Activated CD4-positive, alpha-beta memory T cell treated with anti-CD3 and anti-CD28 coated beads for 36 hours (primary cell): ENCODE measurements at regions of chr2 and their contacts with region 1.

Region 1: DNA sequence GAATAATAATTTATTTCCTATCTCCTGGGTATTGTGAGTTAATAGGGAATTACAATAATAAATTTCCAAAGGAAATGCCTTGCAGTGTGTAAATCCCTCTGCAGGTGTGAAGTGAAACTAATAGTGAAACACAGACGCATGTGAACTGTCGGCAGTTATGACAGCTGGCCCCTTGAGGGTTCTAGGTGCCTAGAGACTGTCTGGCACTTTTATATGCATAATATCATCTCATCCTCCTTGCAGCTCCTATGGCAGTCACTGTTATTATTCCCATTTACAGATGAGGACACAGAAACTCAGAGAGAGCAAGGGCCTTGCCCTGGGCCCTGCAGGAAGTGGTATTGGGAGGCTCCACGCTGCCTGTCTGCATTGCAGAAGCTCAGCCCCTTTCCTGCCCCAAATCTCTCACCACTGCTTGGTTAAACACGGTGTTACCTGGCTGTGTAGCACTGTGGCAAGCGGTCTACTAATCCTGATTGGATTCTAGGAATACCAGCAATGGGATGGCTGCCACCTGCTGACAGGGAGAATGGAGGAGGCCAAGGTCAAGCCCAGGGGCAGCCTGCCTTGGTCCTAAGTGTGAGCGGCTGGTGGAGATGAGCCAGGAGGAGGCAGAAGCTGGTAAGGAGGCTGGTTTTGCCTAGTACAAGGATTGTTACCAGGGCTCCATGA is 32.8 kb upstream of the ACKR3 start:
- DNase-seq: peak; percentile 60
- H3K4me3 Mint-ChIP-seq: peak overlapping the region; percentile 74
- H3K27ac Mint-ChIP-seq: peak overlapping the region; percentile 73
- H3K4me1 Mint-ChIP-seq: peaks cover 50% of the 10 kb centered on the region
- H3K27me3 Mint-ChIP-seq: no peaks in the 10 kb centered on the region

Region 2: DNA sequence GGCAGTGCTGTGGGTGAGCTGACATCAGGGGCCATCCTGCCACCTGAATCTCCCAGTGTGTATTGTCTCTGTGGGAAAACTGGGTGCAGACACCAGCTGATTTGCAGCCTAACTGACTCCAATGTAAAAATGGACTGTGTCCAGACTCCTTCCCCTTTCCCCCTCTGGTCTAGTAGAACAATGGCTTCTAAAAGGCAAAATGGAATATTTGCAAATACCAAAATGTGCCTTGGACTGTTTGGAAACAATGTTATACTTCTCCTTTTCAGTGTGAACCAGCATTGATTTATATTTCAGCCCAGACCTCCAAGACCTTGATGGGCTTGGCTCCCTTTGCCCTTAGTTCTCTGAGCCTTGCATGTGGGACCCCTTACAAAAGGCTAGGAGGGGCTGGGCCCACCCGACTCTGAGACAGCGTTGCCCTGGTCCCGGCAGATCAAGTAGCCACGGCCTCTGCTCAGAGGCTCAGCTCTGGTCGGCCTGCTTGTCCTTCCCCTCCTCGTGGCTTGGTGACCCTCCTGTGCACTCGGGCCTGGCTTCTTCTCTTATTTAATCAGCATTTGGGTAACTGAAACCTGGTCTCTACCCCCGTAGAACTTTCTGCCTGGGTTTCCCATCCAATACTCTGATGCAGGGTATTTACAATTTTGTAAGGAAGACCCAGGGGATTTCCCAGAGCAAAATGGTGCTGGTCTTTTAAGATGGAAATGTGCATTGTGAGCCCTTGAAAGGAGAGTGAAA is 14.8 kb after region 1 on chr2:
- CTCF ChIA-PET with region 1: interaction called, 5 read pairs
- POLR2A ChIA-PET with region 1: interaction called, 3 read pairs
- intact Hi-C with region 1: loop called (anchors 1 kb)
- DNase-seq: no peak
- H3K4me3 Mint-ChIP-seq: peak overlapping the region; percentile 13
- H3K27ac Mint-ChIP-seq: peak overlapping the region; percentile 68
- H3K4me1 Mint-ChIP-seq: peaks cover 93% of the 10 kb centered on the region
- H3K27me3 Mint-ChIP-seq: no peaks in the 10 kb centered on the region

Region 3: GRCh38 chr2:236562434-236562833 is 25.6 kb after region 1 on chr2:
- CTCF ChIA-PET with region 1: no interaction called
- POLR2A ChIA-PET with region 1: no interaction called
- intact Hi-C with region 1: no loop called
- DNase-seq: no peak
- H3K4me3 Mint-ChIP-seq: no peak overlapping the region
- H3K27ac Mint-ChIP-seq: no peak overlapping the region
- H3K4me1 Mint-ChIP-seq: peaks cover 23% of the 10 kb centered on the region
- H3K27me3 Mint-ChIP-seq: no peaks in the 10 kb centered on the region

Region 4: DNA sequence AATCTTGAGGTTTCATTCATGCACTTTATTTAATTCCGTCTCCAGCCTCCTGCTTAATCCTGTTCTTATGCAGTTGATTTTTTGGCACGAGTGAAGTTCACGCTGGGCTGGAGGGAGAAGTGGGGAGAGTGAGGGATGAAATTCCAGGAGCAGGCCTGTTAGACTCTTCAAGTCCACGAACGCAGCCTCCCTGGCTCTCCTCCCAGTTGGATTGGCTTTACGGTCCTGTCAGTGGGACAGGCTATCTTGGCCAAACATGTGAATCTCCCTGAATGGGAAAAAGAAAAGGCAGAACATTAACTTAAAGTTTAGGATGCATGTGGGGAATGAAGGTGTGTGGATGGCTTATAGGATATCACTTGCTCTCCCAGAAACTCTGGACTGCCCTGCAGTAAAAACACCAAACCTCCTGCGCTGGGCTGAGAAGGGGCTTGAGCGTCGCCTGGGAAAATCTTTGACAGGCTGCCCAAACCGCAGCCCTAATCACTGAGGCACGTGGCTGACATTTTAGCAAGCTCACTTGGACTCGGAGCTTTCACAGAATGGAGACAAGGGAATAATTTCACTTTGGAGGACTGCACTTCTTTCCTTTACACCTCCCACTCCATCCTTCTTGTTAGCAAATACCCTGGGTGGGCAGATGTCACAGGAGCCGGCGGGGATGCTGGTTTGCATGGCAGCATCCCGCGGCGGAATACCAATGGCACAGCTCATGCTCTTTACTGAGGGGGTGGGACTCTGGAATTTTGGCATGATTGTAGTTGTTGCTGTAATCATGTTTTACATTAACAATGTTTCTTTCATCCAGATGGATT is 126.6 kb after region 1 on chr2:
- CTCF ChIA-PET with region 1: no interaction called
- POLR2A ChIA-PET with region 1: no interaction called
- intact Hi-C with region 1: no loop called
- DNase-seq: no peak
- H3K4me3 Mint-ChIP-seq: no peak overlapping the region
- H3K27ac Mint-ChIP-seq: no peak overlapping the region
- H3K4me1 Mint-ChIP-seq: no peaks in the 10 kb centered on the region
- H3K27me3 Mint-ChIP-seq: peaks cover 24% of the 10 kb centered on the region